WTC11 (cell line): ENCODE measurements at regions of chr12 and their contacts with region 1.

Region 1: DNA sequence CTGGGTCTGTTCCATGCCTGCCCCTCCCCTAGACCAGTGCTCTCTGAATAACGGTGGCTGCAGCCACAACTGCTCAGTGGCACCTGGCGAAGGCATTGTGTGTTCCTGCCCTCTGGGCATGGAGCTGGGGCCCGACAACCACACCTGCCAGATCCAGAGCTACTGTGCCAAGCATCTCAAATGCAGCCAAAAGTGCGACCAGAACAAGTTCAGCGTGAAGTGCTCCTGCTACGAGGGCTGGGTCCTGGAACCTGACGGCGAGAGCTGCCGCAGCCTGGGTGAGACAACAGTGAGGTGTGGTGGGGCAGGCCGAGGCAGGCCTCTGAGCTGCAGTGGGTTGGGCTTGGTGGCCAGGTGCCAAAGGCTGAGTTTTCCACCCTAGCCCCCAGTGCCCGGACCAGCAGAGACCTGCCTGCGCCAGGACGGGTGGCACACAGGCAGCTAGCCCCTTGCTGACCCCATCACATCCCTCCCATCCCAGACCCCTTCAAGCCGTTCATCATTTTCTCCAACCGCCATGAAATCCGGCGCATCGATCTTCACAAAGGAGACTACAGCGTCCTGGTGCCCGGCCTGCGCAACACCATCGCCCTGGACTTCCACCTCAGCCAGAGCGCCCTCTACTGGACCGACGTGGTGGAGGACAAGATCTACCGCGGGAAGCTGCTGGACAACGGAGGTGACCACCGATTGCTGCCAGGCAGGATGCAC is 28.2 kb upstream of the LRP1-AS start:
- DNase-seq: peak; percentile 95
- ATAC-seq: peak; percentile 80
- H3K4me3 Mint-ChIP-seq: no peak overlapping the region
- H3K27ac Mint-ChIP-seq: peak overlapping the region; percentile 78
- H3K4me1 Mint-ChIP-seq: no peaks in the 10 kb centered on the region
- H3K27me3 Mint-ChIP-seq: no peaks in the 10 kb centered on the region
- CTCF ChIP-seq: peak; percentile 75

Region 2: DNA sequence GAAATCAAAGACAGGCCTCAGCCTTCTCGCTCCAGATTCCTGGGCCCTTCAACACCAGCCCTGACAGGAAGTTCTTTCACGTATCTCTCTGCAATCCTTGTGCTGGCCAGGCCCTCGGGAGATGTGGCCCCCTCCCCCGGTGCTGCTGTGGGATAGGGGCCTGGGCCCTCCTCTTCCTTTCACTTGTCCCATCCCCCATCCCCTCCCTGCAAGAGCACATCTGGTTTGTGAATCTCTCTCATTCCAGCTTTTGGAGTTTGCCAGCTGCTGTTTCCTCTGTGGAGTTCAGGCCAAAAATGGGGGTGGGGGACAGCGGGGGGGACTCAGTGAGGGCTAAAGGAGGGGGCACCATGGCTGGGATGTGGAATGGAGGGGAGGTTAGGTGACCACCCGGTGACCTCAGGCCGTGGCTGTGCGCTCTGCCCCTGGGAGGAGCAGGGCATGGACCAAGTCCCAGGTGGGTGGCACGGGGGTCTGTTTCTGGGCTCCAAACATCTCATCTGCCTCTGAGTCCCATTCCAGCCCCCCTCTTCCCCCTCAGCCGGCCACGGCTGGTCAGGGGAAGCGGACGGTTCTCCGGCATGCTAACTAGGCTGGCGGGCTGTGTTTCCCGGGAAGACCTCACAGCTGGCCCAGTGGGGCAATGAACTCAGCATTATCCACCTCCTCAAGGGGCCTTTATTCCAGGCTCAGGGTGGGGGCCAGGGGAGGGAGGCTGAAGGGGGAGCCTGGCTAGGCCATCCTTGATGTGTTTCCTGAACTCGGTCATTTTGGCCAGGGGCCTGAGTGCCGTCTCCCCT is 39.9 kb before region 1 on chr12:
- CTCF ChIA-PET with region 1: interaction called, 112 read pairs
- POLR2A ChIA-PET with region 1: interaction called, 7 read pairs
- DNase-seq: peak; percentile 54
- ATAC-seq: peak; percentile 55
- H3K4me3 Mint-ChIP-seq: peak overlapping the region; percentile 40
- H3K27ac Mint-ChIP-seq: peak overlapping the region; percentile 96
- H3K4me1 Mint-ChIP-seq: peaks cover 57% of the 10 kb centered on the region
- H3K27me3 Mint-ChIP-seq: no peaks in the 10 kb centered on the region
- CTCF ChIP-seq: no peak

Region 3: GRCh38 chr12:57148469-57149244 is 26.9 kb before region 1 on chr12:
- CTCF ChIA-PET with region 1: interaction called, 11 read pairs
- POLR2A ChIA-PET with region 1: no interaction called
- DNase-seq: no peak
- ATAC-seq: no peak
- H3K4me3 Mint-ChIP-seq: no peak overlapping the region
- H3K27ac Mint-ChIP-seq: 0 out of 2 replicates have a peak overlapping the region, but pooled peaks have one; percentile 45
- H3K4me1 Mint-ChIP-seq: peaks cover 8% of the 10 kb centered on the region
- H3K27me3 Mint-ChIP-seq: no peaks in the 10 kb centered on the region
- CTCF ChIP-seq: no peak

Region 4: GRCh38 chr12:57229634-57230380 is 54.2 kb after region 1 on chr12 and contains the start of gene SHMT2:
- CTCF ChIA-PET with region 1: interaction called, 10 read pairs
- POLR2A ChIA-PET with region 1: no interaction called
- DNase-seq: peak; percentile 97
- ATAC-seq: peak; percentile 41
- H3K4me3 Mint-ChIP-seq: peak within 1 kb of the TSS; percentile 98
- H3K27ac Mint-ChIP-seq: peak within 1 kb of the TSS; percentile 94
- H3K4me1 Mint-ChIP-seq: peaks cover 49% of the 10 kb centered on the region
- H3K27me3 Mint-ChIP-seq: peaks cover 53% of the 10 kb centered on the region
- CTCF ChIP-seq: no peak
- total RNA-seq, gene SHMT2: 262 to 297 TPM (median 265 TPM) in 3 replicates